AG04450 (cell line): ENCODE measurements at regions of chr22 and their contacts with region 1.

Region 1: GRCh38 chr22:29154364-29155048 is 51.2 kb upstream of the EMID1 start:
- DNase-seq: peak; percentile 15
- H3K4me3 ChIP-seq: peak overlapping the region; percentile 25; the same call in 1 of the 2 replicates
- H3K27ac ChIP-seq: no peak overlapping the region
- H3K27me3 ChIP-seq: no peaks in the 10 kb centered on the region
- CTCF ChIP-seq: peak; percentile 93

Region 2: DNA sequence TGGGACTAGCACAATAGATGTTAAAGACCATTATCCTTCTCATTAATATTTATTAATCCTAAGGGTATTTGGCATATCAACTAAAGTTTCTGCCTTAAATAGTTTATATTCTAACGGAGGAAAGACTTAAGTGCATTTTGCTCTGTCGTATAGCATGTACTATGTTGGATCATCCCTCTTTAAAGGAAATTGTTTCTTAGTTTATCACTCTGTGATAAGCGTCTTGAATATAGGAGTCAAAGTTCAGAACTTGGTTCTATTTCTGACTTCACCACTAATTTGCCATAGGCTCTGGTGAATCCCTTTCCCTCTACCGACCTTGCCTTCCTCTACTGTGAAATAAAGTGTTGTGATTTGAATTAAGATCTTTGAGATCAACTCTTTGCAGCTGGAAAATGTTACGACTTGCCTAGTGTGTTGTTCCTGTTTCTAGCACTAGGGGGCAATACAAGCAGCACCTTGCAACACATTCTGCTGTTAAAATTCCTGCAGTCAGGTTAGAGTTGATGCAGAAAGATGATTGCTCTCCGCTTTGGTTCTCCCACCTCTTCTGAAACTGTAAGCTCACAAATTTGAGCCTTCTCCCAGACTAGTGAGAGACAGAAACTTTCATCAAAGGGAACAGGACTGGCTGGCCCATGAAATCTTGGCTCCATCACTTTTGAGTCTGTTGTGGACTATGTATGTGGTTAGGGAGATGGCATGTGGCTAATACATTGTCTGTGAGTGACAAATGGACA is 299.0 kb before region 1 on chr22:
- CTCF ChIA-PET with region 1: interaction called, 16 read pairs
- POLR2A ChIA-PET with region 1: no interaction called
- DNase-seq: peak; percentile 58
- H3K4me3 ChIP-seq: no peak overlapping the region
- H3K27ac ChIP-seq: no peak overlapping the region
- H3K27me3 ChIP-seq: no peaks in the 10 kb centered on the region
- CTCF ChIP-seq: peak; percentile 97

Region 3: DNA sequence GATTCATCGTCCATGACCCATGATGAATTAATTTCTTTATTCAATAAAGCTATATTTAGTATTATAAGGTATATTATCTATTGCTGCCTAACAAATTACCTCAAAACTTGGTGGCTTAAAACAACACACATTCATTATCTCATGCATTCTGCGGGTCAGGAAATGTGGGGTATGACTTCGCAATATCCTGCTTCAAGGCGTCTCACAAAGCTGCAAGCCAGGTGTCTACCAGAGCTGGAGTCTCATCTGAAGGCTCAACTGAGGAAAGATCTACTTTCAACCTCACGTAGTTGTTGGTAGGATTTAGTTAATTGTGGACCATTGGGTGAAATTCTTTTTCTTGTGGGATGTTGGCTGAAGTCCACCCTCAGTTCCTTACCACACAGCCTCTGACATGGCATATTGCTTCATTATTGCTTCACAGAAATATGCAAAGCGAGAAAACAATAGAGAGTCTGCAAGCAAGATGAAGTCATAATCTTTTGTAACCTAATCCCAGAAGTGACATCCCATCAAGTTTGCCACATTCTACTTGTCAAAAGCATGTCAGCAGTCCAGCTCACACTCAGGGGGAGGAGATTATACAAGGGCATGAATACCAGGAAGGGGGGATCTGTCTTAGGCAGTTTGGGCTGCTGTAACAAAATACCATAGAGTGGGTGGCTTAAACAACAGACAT is 36.6 kb before region 1 on chr22:
- CTCF ChIA-PET with region 1: interaction called, 11 read pairs
- POLR2A ChIA-PET with region 1: no interaction called
- DNase-seq: no peak
- H3K4me3 ChIP-seq: no peak overlapping the region
- H3K27ac ChIP-seq: no peak overlapping the region
- H3K27me3 ChIP-seq: no peaks in the 10 kb centered on the region
- CTCF ChIP-seq: no peak

Region 4: GRCh38 chr22:29139965-29140782 is 14.3 kb before region 1 on chr22:
- CTCF ChIA-PET with region 1: interaction called, 19 read pairs
- POLR2A ChIA-PET with region 1: no interaction called
- DNase-seq: no peak
- H3K4me3 ChIP-seq: no peak overlapping the region
- H3K27ac ChIP-seq: no peak overlapping the region
- H3K27me3 ChIP-seq: no peaks in the 10 kb centered on the region
- CTCF ChIP-seq: no peak